Activated CD4-positive, alpha-beta T cell treated with anti-CD3 and anti-CD28 coated beads for 36 hours (primary cell): ENCODE measurements at regions of chr17 and their contacts with region 1.

Region 1: DNA sequence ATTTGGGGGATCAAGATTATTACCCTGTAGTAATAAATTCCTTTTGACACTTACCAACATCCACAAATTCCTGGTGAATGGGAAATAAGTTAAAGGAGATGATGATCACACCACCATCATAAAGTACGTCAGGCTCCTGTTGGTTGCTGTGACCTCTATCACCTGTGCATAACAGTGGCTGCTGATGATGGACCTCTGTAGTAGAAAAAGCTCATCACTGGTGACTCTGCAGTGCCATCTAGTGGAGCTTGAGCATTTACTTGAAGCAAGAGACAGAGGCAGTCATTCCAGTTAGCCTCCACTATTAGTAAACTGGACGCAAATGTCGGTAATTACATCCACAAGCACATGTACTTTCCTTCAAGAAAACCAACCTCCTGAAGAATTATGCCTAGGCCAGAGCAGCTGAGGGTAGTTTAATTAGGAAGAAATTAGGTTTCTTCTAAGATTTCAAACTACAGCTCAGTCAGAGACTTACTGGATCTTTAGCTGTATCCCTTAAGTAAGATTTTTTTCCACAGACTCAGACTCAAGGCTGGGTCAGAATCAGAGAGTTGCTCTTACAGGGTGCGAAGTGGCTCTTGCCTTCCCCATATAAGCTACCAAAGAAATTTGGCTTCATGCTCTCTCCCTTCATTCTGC is 39.3 kb downstream of the CYB561 start:
- DNase-seq: peak; percentile 81
- ATAC-seq: peak; percentile 80
- H3K4me3 Mint-ChIP-seq: no peak overlapping the region
- H3K27ac Mint-ChIP-seq: peak overlapping the region; percentile 39
- H3K4me1 Mint-ChIP-seq: peaks cover 8% of the 10 kb centered on the region
- H3K27me3 Mint-ChIP-seq: no peaks in the 10 kb centered on the region

Region 2: GRCh38 chr17:62671583-62672312 is 735.1 kb before region 1 on chr17:
- CTCF ChIA-PET with region 1: interaction called, 5 read pairs
- POLR2A ChIA-PET with region 1: no interaction called
- intact Hi-C with region 1: loop called (anchors 1 kb)
- DNase-seq: no peak
- ATAC-seq: no peak
- H3K4me3 Mint-ChIP-seq: no peak overlapping the region
- H3K27ac Mint-ChIP-seq: no peak overlapping the region
- H3K4me1 Mint-ChIP-seq: no peaks in the 10 kb centered on the region
- H3K27me3 Mint-ChIP-seq: no peaks in the 10 kb centered on the region

Region 3: GRCh38 chr17:62995377-62995885 is 411.4 kb before region 1 on chr17:
- CTCF ChIA-PET with region 1: interaction called, 17 read pairs
- POLR2A ChIA-PET with region 1: no interaction called
- intact Hi-C with region 1: loop called (anchors 1 kb)
- DNase-seq: peak; percentile 59
- ATAC-seq: peak; percentile 91
- H3K4me3 Mint-ChIP-seq: no peak overlapping the region
- H3K27ac Mint-ChIP-seq: no peak overlapping the region
- H3K4me1 Mint-ChIP-seq: peaks cover 10% of the 10 kb centered on the region
- H3K27me3 Mint-ChIP-seq: no peaks in the 10 kb centered on the region

Region 4: DNA sequence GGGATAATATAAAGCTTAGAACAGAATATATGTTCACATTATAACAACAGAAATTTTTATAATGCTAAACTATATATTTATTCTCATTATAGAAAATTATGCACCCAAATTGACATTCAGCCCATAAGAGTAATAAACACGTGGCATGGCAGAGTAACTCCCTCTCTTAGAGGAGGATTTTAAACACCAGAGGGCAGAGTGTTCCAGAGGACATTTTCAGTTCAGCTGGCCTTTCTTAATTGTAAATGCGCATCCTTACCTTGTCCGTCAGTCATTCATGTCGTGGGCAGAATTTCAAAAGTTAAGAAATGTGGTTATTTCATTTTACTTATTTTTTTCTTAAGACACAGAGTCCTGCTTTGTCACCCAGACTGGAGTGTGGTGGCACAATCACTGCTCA is 293.6 kb before region 1 on chr17:
- CTCF ChIA-PET with region 1: interaction called, 4 read pairs
- POLR2A ChIA-PET with region 1: no interaction called
- intact Hi-C with region 1: loop called in 1 of 2 experiments (anchors 1 kb)
- DNase-seq: no peak
- ATAC-seq: no peak
- H3K4me3 Mint-ChIP-seq: no peak overlapping the region
- H3K27ac Mint-ChIP-seq: no peak overlapping the region
- H3K4me1 Mint-ChIP-seq: no peaks in the 10 kb centered on the region
- H3K27me3 Mint-ChIP-seq: no peaks in the 10 kb centered on the region

Region 5: DNA sequence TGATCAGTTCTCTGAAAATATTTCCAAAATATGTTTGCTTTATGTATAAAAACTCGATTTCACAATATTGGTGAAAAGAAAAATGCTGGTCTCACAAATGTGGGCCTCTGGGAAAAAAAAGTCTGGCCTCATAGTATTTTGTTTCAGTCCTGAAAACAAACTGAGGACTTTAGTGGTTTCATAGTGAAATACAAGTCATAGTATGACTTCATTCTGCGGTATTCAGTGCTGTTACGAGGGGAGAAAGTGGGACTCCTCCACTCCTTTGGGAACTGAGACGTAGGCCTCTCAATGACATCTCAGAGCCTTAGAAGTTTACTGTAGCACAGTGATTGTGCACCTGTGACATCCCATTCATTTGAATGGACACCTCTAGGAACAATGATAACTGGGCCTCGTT is 16.7 kb before region 1 on chr17:
- CTCF ChIA-PET with region 1: interaction called, 13 read pairs
- POLR2A ChIA-PET with region 1: no interaction called
- intact Hi-C with region 1: no loop called
- DNase-seq: no peak
- ATAC-seq: no peak
- H3K4me3 Mint-ChIP-seq: no peak overlapping the region
- H3K27ac Mint-ChIP-seq: no peak overlapping the region
- H3K4me1 Mint-ChIP-seq: no peaks in the 10 kb centered on the region
- H3K27me3 Mint-ChIP-seq: no peaks in the 10 kb centered on the region

Region 6: GRCh38 chr17:63425482-63425881 is 18.7 kb after region 1 on chr17:
- CTCF ChIA-PET with region 1: interaction called, 25 read pairs
- POLR2A ChIA-PET with region 1: no interaction called
- intact Hi-C with region 1: no loop called
- DNase-seq: peak; percentile 82
- ATAC-seq: peak; percentile 93
- H3K4me3 Mint-ChIP-seq: no peak overlapping the region
- H3K27ac Mint-ChIP-seq: no peak overlapping the region
- H3K4me1 Mint-ChIP-seq: peaks cover 27% of the 10 kb centered on the region
- H3K27me3 Mint-ChIP-seq: no peaks in the 10 kb centered on the region

Region 7: DNA sequence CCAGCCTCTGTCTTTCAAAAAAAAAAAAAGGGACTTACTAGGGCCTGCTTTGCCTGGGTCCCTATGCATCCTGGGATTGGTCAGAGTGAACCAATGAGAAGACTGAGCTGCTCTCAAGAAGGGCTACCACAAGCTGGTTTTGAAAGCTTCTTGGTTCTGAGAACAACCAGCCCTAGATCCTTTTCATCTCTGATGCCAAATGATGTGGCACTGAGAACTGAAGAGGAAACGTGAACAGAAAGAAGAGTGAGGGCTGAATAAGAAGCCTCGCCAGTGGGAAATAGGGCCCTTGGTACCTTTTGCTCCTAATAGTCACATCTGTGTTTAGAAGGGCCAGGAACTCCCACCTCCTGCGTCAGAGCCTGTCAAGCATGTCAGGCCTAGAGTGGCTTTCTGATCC is 204.5 kb after region 1 on chr17:
- CTCF ChIA-PET with region 1: interaction called, 11 read pairs
- POLR2A ChIA-PET with region 1: no interaction called
- intact Hi-C with region 1: loop called in 1 of 2 experiments (anchors 1 kb)
- DNase-seq: peak; percentile 59
- ATAC-seq: peak; percentile 85
- H3K4me3 Mint-ChIP-seq: peak overlapping the region; percentile 51
- H3K27ac Mint-ChIP-seq: peak overlapping the region; percentile 91
- H3K4me1 Mint-ChIP-seq: peaks cover 27% of the 10 kb centered on the region
- H3K27me3 Mint-ChIP-seq: no peaks in the 10 kb centered on the region